T-cell (primary cell): ENCODE measurements at regions of chr19 and their contacts with region 1.

Region 1: GRCh38 chr19:43519436-43520088 is 7.4 kb downstream of the ETHE1 start:
- DNase-seq: peak; percentile 42 to 92 (median 73)
- ATAC-seq: peak; percentile 84 to 99 (median 86)
- H3K4me3 ChIP-seq: no peak overlapping the region
- H3K4me3 Mint-ChIP-seq: no peak overlapping the region
- H3K27ac ChIP-seq: no peak overlapping the region
- H3K27ac Mint-ChIP-seq: peak overlapping the region; percentile 26 to 65
- H3K4me1 ChIP-seq: peaks cover 5 to 9% of the 10 kb centered on the region in 2 experiments
- H3K4me1 Mint-ChIP-seq: peaks cover 12 to 18% (median 15%) of the 10 kb centered on the region in 3 donors
- H3K27me3 ChIP-seq: no peaks in the 10 kb centered on the region
- H3K27me3 Mint-ChIP-seq: no peaks in the 10 kb centered on the region

Region 2: GRCh38 chr19:43430142-43430710 is 89.3 kb before region 1 on chr19:
- CTCF ChIA-PET with region 1: interaction called, 7 to 48 read pairs
- POLR2A ChIA-PET with region 1: interaction called in 1 of 2 experiments, 4 read pairs
- DNase-seq: peak in 12 of 35 experiments; percentile 9 to 57 (median 24)
- ATAC-seq: peak in 1 of 4 experiments; percentile 61
- H3K4me3 ChIP-seq: no peak overlapping the region
- H3K4me3 Mint-ChIP-seq: no peak overlapping the region
- H3K27ac ChIP-seq: no peak overlapping the region
- H3K27ac Mint-ChIP-seq: peak overlapping the region in 1 of 2 donors; percentile 82
- H3K4me1 ChIP-seq: peaks cover 7 to 13% of the 10 kb centered on the region in 2 experiments
- H3K4me1 Mint-ChIP-seq: peaks cover 19 to 36% (median 28%) of the 10 kb centered on the region in 3 donors
- H3K27me3 ChIP-seq: peaks cover 0 to 5% of the 10 kb centered on the region in 2 experiments
- H3K27me3 Mint-ChIP-seq: no peaks in the 10 kb centered on the region

Region 3: GRCh38 chr19:43438291-43439096 is 81.1 kb before region 1 on chr19:
- CTCF ChIA-PET with region 1: interaction called, 7 to 23 read pairs
- POLR2A ChIA-PET with region 1: interaction called in 1 of 2 experiments, 5 read pairs
- DNase-seq: peak in 3 of 35 experiments; percentile 8 to 30 (median 23)
- ATAC-seq: peak; percentile 10 to 35 (median 16)
- H3K4me3 ChIP-seq: peak overlapping the region; percentile 16 to 25
- H3K4me3 Mint-ChIP-seq: peak overlapping the region; percentile 13 to 67 (median 28)
- H3K27ac ChIP-seq: peak overlapping the region; percentile 78
- H3K27ac Mint-ChIP-seq: peak overlapping the region; percentile 93 to 97
- H3K4me1 ChIP-seq: peaks cover 28 to 36% of the 10 kb centered on the region in 2 experiments
- H3K4me1 Mint-ChIP-seq: peaks cover 58 to 69% (median 62%) of the 10 kb centered on the region in 3 donors
- H3K27me3 ChIP-seq: no peaks in the 10 kb centered on the region
- H3K27me3 Mint-ChIP-seq: no peaks in the 10 kb centered on the region

Region 4: GRCh38 chr19:43446746-43447489 is 72.6 kb before region 1 on chr19:
- CTCF ChIA-PET with region 1: interaction called, 9 to 84 read pairs
- POLR2A ChIA-PET with region 1: interaction called in 1 of 2 experiments, 7 read pairs
- DNase-seq: peak; percentile 58 to 90 (median 77)
- ATAC-seq: peak; percentile 88 to 94 (median 90)
- H3K4me3 ChIP-seq: no peak overlapping the region
- H3K4me3 Mint-ChIP-seq: no peak overlapping the region
- H3K27ac ChIP-seq: no peak overlapping the region
- H3K27ac Mint-ChIP-seq: peak overlapping the region in 1 of 2 donors; percentile 76
- H3K4me1 ChIP-seq: peaks cover 0 to 13% of the 10 kb centered on the region in 2 experiments
- H3K4me1 Mint-ChIP-seq: peaks cover 27 to 39% (median 39%) of the 10 kb centered on the region in 3 donors
- H3K27me3 ChIP-seq: no peaks in the 10 kb centered on the region
- H3K27me3 Mint-ChIP-seq: no peaks in the 10 kb centered on the region

Region 5: DNA sequence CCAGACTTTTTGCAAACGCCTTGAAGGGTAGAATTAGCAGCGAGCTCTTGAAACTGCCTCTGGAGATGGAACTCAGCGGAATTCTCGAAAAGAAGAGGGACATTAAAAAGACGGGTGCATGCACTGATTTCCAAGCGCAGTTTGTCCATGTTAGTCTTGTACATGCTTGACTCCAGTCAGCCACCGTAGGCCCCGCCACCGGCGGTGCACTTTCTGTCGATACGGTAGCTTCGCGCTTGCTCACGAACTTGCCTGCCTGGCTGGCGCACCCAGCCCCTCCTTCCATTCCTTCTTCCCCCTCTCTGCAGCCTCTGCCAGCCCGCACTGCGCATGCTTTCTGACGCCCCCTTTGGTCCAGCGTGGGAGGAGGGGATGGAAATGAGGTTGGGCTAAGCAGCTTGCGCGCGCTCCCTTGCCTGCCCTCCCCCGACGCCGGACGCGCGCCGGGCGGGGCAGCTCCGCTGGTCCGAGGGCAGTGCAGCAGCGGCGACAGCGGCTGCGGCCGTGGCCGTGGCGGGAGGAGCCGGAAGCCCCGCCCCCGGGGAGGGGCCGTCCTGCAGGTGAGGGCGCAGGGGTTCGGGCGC is 13.5 kb after region 1 on chr19 and contains the start of gene ZNF575:
- CTCF ChIA-PET with region 1: interaction called, 5 to 24 read pairs
- POLR2A ChIA-PET with region 1: no interaction called
- DNase-seq: peak; percentile 67 to 89 (median 79)
- ATAC-seq: peak; percentile 64 to 76 (median 71)
- H3K4me3 ChIP-seq: peak within 1 kb of the TSS; percentile 69 to 82
- H3K4me3 Mint-ChIP-seq: peak within 1 kb of the TSS; percentile 88 to 90 (median 88)
- H3K27ac ChIP-seq: peak within 1 kb of the TSS; percentile 71
- H3K27ac Mint-ChIP-seq: peak within 1 kb of the TSS; percentile 93 to 94
- H3K4me1 ChIP-seq: peaks cover 2 to 23% of the 10 kb centered on the region in 2 experiments
- H3K4me1 Mint-ChIP-seq: peaks cover 13 to 23% (median 21%) of the 10 kb centered on the region in 3 donors
- H3K27me3 ChIP-seq: no peaks in the 10 kb centered on the region
- H3K27me3 Mint-ChIP-seq: no peaks in the 10 kb centered on the region
- total RNA-seq, gene ZNF575: 3.4 to 12.7 (median 6.2) TPM

Region 6: GRCh38 chr19:43606569-43607229 is 87.1 kb after region 1 on chr19:
- CTCF ChIA-PET with region 1: no interaction called
- POLR2A ChIA-PET with region 1: no interaction called
- DNase-seq: no peak
- ATAC-seq: no peak
- H3K4me3 ChIP-seq: no peak overlapping the region
- H3K4me3 Mint-ChIP-seq: no peak overlapping the region
- H3K27ac ChIP-seq: no peak overlapping the region
- H3K27ac Mint-ChIP-seq: peak overlapping the region in 1 of 2 donors; percentile 18
- H3K4me1 ChIP-seq: peaks cover 0 to under 1% of the 10 kb centered on the region in 2 experiments
- H3K4me1 Mint-ChIP-seq: peaks cover 10 to 12% (median 10%) of the 10 kb centered on the region in 3 donors
- H3K27me3 ChIP-seq: no peaks in the 10 kb centered on the region
- H3K27me3 Mint-ChIP-seq: no peaks in the 10 kb centered on the region